SK-N-SH (cell line): ENCODE measurements at regions of chr3 and their contacts with region 1.

Region 1: GRCh38 chr3:133384331-133385027 is 15.4 kb upstream of the BFSP2 start:
- DNase-seq: peak; percentile 88
- H3K4me3 ChIP-seq: peak overlapping the region in 1 of 2 experiments; percentile 53; a peak in 1 of 4 replicates
- H3K27ac ChIP-seq: peak overlapping the region in 1 of 2 experiments; percentile 82; a peak in 2 of 4 replicates
- H3K4me1 ChIP-seq: peaks cover 0 to 53% of the 10 kb centered on the region in 2 experiments; a peak in 2 of 4 replicates
- H3K27me3 ChIP-seq: no peaks in the 10 kb centered on the region
- CTCF ChIP-seq: peak; percentile 88
- EP300 ChIP-seq: peak in 1 of 2 experiments; percentile 70; a peak in 2 of 4 replicates
- RAD21 ChIP-seq: peak; percentile 99

Region 2: GRCh38 chr3:133271539-133271938 is 112.9 kb before region 1 on chr3:
- CTCF ChIA-PET with region 1: interaction called, 10 read pairs
- POLR2A ChIA-PET with region 1: no interaction called
- DNase-seq: no peak
- H3K4me3 ChIP-seq: no peak overlapping the region
- H3K27ac ChIP-seq: peak overlapping the region in 1 of 2 experiments; percentile 99; a peak in 2 of 4 replicates
- H3K4me1 ChIP-seq: peaks cover 0 to 37% of the 10 kb centered on the region in 2 experiments; a peak in 2 of 4 replicates
- H3K27me3 ChIP-seq: no peaks in the 10 kb centered on the region
- CTCF ChIP-seq: no peak
- EP300 ChIP-seq: no peak
- RAD21 ChIP-seq: no peak

Region 3: DNA sequence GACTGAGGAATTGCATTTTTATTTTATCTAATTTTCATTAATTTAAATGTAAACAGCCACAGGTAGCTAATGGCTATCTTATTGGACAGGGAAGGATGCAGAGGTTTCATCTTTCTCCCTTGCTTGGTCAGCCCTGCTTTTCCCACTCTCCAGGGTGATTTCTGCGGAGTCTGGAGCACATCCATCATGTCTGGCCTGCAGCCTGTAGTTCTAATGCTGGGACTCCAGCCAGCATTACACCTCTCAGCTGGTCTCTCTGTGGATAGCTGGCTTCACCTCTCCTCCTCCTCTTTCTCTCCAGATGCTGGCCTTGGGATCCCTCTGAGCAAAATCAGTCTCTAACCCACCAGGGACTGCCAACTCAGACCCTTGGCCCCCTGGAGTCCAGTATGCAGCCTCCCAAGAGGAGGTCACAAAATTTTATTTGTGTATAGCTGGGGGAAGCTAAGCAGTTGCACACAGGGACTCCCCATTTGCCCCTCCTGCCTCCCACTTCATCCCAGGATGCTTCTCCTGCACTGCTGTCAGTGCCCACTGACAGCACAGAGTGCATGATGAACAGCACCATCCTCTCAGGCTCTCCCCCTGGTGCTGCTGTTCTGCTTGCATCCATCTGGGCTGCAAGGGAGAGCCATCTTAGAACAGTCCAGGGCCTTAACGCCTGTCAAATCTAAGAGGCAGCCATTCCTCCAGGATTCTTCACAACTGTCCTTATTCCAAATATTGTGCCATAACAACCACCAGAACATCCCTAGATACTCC is 17.1 kb after region 1 on chr3:
- CTCF ChIA-PET with region 1: interaction called, 26 read pairs
- POLR2A ChIA-PET with region 1: interaction called, 4 read pairs
- DNase-seq: peak; percentile 77
- H3K4me3 ChIP-seq: no peak overlapping the region
- H3K27ac ChIP-seq: peak overlapping the region in 1 of 2 experiments; percentile 64; a peak in 2 of 4 replicates
- H3K4me1 ChIP-seq: peaks cover 0 to 22% of the 10 kb centered on the region in 2 experiments; a peak in 2 of 4 replicates
- H3K27me3 ChIP-seq: no peaks in the 10 kb centered on the region
- CTCF ChIP-seq: no peak
- EP300 ChIP-seq: no peak
- RAD21 ChIP-seq: no peak

Region 4: DNA sequence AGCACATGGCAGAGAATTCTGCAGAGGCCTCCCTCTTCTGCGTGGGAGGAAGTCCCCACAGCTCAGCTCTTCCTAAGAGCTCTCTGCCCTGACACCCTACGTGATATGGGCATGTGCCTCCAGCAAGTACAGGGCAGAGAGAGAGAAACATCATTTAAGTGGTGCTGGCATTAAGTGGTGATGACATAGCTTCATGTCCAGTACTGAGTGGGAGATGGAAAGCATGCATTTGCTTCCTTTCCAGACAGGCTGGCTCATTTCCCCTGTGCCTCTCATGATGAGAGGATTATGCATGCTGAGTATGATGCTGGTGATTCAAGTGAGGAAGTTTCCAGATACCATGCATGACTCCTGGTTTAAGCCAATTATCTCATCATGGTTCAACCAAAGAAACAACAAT is 42.2 kb after region 1 on chr3:
- CTCF ChIA-PET with region 1: interaction called, 34 read pairs
- POLR2A ChIA-PET with region 1: no interaction called
- DNase-seq: no peak
- H3K4me3 ChIP-seq: no peak overlapping the region
- H3K27ac ChIP-seq: no peak overlapping the region
- H3K4me1 ChIP-seq: peaks cover 3 to 12% of the 10 kb centered on the region in 2 experiments; a peak in 2 of 4 replicates
- H3K27me3 ChIP-seq: no peaks in the 10 kb centered on the region
- CTCF ChIP-seq: no peak
- EP300 ChIP-seq: no peak
- RAD21 ChIP-seq: no peak

Region 5: GRCh38 chr3:133910422-133910821 is 525.9 kb after region 1 on chr3:
- CTCF ChIA-PET with region 1: no interaction called
- POLR2A ChIA-PET with region 1: no interaction called
- DNase-seq: no peak
- H3K4me3 ChIP-seq: no peak overlapping the region
- H3K27ac ChIP-seq: no peak overlapping the region
- H3K4me1 ChIP-seq: no peaks in the 10 kb centered on the region
- H3K27me3 ChIP-seq: peaks cover 6% of the 10 kb centered on the region; the same call in 1 of the 2 replicates
- CTCF ChIP-seq: peak; percentile 35; the same call in 1 of the 2 replicates
- EP300 ChIP-seq: no peak
- RAD21 ChIP-seq: no peak; the same call in 1 of the 2 replicates